ENCODE measurements at regions of chr3 and their contacts with region 1.

Region 1: GRCh38 chr3:98994128-98994762 is 92.8 kb upstream of the DCBLD2 start:
- DNase-seq: peak; percentile 74
- H3K4me3 ChIP-seq: no peak overlapping the region
- H3K27ac ChIP-seq: no peak overlapping the region
- H3K4me1 ChIP-seq: no peaks in the 10 kb centered on the region
- H3K27me3 ChIP-seq: no peaks in the 10 kb centered on the region

Region 2: GRCh38 chr3:98630416-98630815 is 363.8 kb before region 1 on chr3:
- in situ Hi-C with region 1: no loop called
- DNase-seq: no peak
- H3K4me3 ChIP-seq: no peak overlapping the region
- H3K27ac ChIP-seq: no peak overlapping the region
- H3K4me1 ChIP-seq: no peaks in the 10 kb centered on the region
- H3K27me3 ChIP-seq: peaks cover 30% of the 10 kb centered on the region

Region 3: GRCh38 chr3:98817547-98818041 is 176.7 kb before region 1 on chr3:
- in situ Hi-C with region 1: loop called (anchors 5 kb)
- DNase-seq: peak; percentile 60
- H3K4me3 ChIP-seq: no peak overlapping the region
- H3K27ac ChIP-seq: no peak overlapping the region
- H3K4me1 ChIP-seq: peaks cover 24% of the 10 kb centered on the region
- H3K27me3 ChIP-seq: no peaks in the 10 kb centered on the region

Region 4: GRCh38 chr3:99520513-99520912 is 526.3 kb after region 1 on chr3:
- in situ Hi-C with region 1: no loop called
- DNase-seq: no peak
- H3K4me3 ChIP-seq: no peak overlapping the region
- H3K27ac ChIP-seq: no peak overlapping the region
- H3K4me1 ChIP-seq: no peaks in the 10 kb centered on the region
- H3K27me3 ChIP-seq: no peaks in the 10 kb centered on the region

Measured in GM23248 (cell line).